ENCODE measurements at regions of chr16 and their contacts with region 1.

Region 1: DNA sequence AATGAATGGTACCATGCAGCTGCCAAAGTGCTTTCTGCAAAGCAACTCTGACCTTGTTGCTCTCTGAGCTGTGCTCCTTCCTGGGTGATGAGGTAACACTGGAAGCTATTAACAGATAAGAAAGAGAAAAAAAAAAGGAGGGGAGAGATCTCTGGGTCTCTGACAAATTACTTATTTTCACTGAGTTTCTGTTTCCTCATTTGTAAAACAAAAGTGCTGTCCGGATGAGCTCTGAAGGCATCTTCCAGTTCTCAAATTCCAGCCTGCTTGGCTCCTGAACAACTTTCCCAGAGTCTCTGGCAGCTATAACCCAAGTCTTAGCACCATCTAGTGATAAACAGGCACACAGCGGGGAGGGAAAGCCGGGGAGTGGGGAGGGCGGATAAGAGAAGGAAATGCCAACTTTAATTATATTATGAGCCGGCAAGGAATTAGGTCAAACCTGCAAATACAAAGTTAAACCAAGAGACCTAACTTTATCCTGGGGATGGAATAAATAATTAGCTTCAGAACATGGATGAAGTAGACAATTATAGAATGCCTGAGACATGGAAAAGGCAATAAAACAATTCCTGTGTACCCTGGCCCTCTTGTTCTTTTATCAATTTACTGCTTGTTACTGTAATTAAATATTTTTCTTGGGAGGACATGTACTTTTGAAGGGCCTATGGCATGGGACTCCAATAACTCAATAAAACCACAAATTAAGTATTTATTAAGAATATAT is 61.3 kb upstream of the KIFC3 start:
- DNase-seq: peak in 2 of 4 experiments; percentile 46 to 55
- ATAC-seq: peak; percentile 78
- H3K4me3 ChIP-seq: no peak overlapping the region
- H3K27ac ChIP-seq: no peak overlapping the region
- H3K4me1 ChIP-seq: peaks cover 3 to 14% of the 10 kb centered on the region in 2 experiments; a peak in 3 of 5 replicates
- H3K27me3 ChIP-seq: peaks cover 6 to 10% of the 10 kb centered on the region in 2 experiments; a peak in 2 of 5 replicates
- CTCF ChIP-seq: peak; percentile 56 to 77 (median 57)
- EP300 ChIP-seq: no peak
- POLR2A ChIP-seq: no peak
- RAD21 ChIP-seq: peak; percentile 84 to 89

Region 2: DNA sequence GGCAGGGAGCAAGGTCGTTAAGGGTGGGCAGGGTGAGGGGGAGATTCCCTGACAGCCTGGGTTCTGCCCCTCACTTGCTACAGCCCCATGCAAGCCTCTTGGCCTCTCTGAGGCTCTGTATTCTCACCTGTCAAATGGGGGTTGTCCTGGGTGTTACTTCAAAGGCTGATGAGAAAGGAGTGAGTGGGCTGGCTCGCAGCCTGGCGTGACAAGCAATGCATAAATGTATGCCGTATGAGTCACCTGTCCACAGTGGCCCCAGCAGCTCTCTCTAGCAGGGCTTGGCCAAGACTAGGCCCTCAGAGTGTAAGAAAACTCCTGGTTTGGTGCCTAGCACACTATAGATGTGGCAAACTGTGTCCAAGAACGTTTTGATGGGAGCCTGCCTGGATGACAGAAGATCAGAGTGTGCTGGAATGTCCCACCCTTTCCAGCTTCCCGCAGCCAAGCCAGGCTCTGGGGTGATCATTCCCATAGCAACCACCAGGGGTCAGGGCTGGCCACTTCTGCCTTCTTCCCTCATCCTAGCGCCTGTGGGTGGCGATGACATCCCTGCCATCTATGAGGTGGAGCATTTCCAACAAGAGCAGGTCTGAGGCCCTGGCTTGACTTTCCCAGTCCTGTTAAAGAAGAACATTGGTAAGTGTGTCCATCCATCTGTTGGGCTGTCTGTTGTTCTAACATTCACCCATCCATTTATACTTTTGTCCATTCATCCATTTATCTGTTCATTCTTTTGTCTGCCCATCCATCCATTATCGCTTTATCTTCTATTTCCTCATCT is 272.3 kb before region 1 on chr16:
- CTCF ChIA-PET with region 1: interaction called, 8 read pairs
- POLR2A ChIA-PET with region 1: no interaction called
- in situ Hi-C with region 1: no loop called
- intact Hi-C with region 1: loop called (anchors 10 kb)
- DNase-seq: peak; percentile 80 to 85 (median 82)
- ATAC-seq: peak; percentile 100
- H3K4me3 ChIP-seq: no peak overlapping the region
- H3K27ac ChIP-seq: no peak overlapping the region
- H3K4me1 ChIP-seq: peaks cover 6 to 11% of the 10 kb centered on the region in 2 experiments; a peak in 4 of 5 replicates
- H3K27me3 ChIP-seq: peaks cover 2 to 8% of the 10 kb centered on the region in 2 experiments; a peak in 2 of 5 replicates
- CTCF ChIP-seq: peak; percentile 94 to 99 (median 99)
- EP300 ChIP-seq: no peak
- POLR2A ChIP-seq: no peak
- RAD21 ChIP-seq: peak; percentile 81 to 94

Region 3: GRCh38 chr16:57653936-57654335 is 209.7 kb before region 1 on chr16:
- CTCF ChIA-PET with region 1: interaction called, 5 read pairs
- POLR2A ChIA-PET with region 1: interaction called, 3 read pairs
- in situ Hi-C with region 1: no loop called
- intact Hi-C with region 1: loop called (anchors 10 kb)
- DNase-seq: no peak
- ATAC-seq: no peak
- H3K4me3 ChIP-seq: no peak overlapping the region
- H3K27ac ChIP-seq: no peak overlapping the region
- H3K4me1 ChIP-seq: peaks cover 0 to 21% of the 10 kb centered on the region in 2 experiments; a peak in 2 of 5 replicates
- H3K27me3 ChIP-seq: peaks cover 3 to 5% of the 10 kb centered on the region in 2 experiments; a peak in 1 of 5 replicates
- CTCF ChIP-seq: no peak
- EP300 ChIP-seq: no peak
- POLR2A ChIP-seq: no peak
- RAD21 ChIP-seq: no peak

Region 4: GRCh38 chr16:57757326-57757786 is 106.2 kb before region 1 on chr16:
- CTCF ChIA-PET with region 1: interaction called, 7 read pairs
- POLR2A ChIA-PET with region 1: interaction called, 3 read pairs
- in situ Hi-C with region 1: no loop called
- intact Hi-C with region 1: loop called (anchors 1 kb)
- DNase-seq: peak; percentile 90 to 94 (median 94)
- ATAC-seq: peak; percentile 98
- H3K4me3 ChIP-seq: no peak overlapping the region
- H3K27ac ChIP-seq: 0 out of 3 replicates have a peak overlapping the region, but pooled peaks have one; percentile 20
- H3K4me1 ChIP-seq: peaks cover 0 to 60% of the 10 kb centered on the region in 2 experiments; a peak in 3 of 5 replicates
- H3K27me3 ChIP-seq: no peaks in the 10 kb centered on the region
- CTCF ChIP-seq: peak; percentile 94 to 97 (median 95)
- EP300 ChIP-seq: no peak
- POLR2A ChIP-seq: no peak; the same call in 1 of the 2 replicates
- RAD21 ChIP-seq: peak; percentile 89 to 91

Region 5: GRCh38 chr16:57795431-57795878 is 68.1 kb before region 1 on chr16:
- CTCF ChIA-PET with region 1: interaction called, 3 read pairs
- POLR2A ChIA-PET with region 1: no interaction called
- in situ Hi-C with region 1: no loop called
- intact Hi-C with region 1: loop called (anchors 1 kb)
- DNase-seq: peak in 3 of 4 experiments; percentile 27 to 63 (median 44)
- ATAC-seq: peak; percentile 68
- H3K4me3 ChIP-seq: no peak overlapping the region
- H3K27ac ChIP-seq: no peak overlapping the region
- H3K4me1 ChIP-seq: peaks cover 24 to 43% of the 10 kb centered on the region in 2 experiments
- H3K27me3 ChIP-seq: no peaks in the 10 kb centered on the region
- CTCF ChIP-seq: peak; percentile 33 to 53 (median 45); a peak in 5 of 6 replicates
- EP300 ChIP-seq: no peak
- POLR2A ChIP-seq: no peak
- RAD21 ChIP-seq: peak in 1 of 2 experiments; percentile 46; a peak in 2 of 4 replicates

Region 6: DNA sequence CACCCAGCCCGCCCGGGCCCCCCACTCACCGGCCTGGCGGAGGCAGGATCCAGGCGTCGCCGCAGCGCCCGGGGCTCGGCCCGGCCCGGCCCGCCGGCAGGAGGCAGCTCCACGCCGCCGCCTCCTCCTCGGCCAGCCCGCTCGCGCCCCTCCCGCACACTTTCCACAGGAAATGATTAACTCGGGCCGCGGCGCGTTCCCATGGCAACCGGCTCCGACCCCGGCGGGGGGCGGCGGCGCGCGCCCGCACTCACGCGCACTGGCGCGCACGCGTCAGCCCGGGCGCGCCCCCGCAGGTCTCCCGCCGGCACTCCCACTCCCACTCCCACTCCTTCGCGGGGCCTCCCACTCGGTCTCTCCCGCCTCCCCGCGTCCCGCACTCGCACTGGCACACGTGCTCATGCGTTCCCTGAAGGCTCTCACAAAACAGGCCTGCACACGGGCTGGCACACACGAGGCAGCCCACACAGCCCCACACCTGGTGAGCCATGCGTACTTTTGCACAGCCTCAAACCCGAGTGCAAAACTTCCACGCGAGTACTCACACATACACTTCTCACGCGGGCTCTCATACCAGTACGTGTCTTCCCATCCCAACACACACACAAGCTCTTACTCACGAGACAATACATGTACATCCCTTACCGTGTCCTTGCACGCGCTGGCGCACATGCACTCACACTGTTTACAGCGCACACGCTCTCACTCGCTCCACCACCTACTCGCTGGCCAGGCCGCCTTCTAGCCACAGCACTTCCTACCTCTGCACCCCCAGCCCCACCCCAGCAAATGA is 61.1 kb before region 1 on chr16 and contains the start of gene KIFC3:
- CTCF ChIA-PET with region 1: interaction called, 9 read pairs
- POLR2A ChIA-PET with region 1: interaction called, 3 read pairs
- in situ Hi-C with region 1: no loop called
- intact Hi-C with region 1: loop called (anchors 2 kb)
- DNase-seq: peak; percentile 88 to 94 (median 92)
- ATAC-seq: peak; percentile 71
- H3K4me3 ChIP-seq: peak within 1 kb of the TSS; percentile 61
- H3K27ac ChIP-seq: peak within 1 kb of the TSS; percentile 86
- H3K4me1 ChIP-seq: peaks cover 54 to 55% of the 10 kb centered on the region in 2 experiments
- H3K27me3 ChIP-seq: no peaks in the 10 kb centered on the region
- CTCF ChIP-seq: peak in 2 of 3 experiments; percentile 37 to 59; a peak in 3 of 6 replicates
- EP300 ChIP-seq: no peak; the same call in 1 of the 2 replicates
- POLR2A ChIP-seq: peak; percentile 69; the same call in 1 of the 2 replicates
- RAD21 ChIP-seq: peak in 1 of 2 experiments; percentile 61; a peak in 3 of 4 replicates
- polyA plus RNA-seq, gene KIFC3: 0.23 to 0.96 TPM

Region 7: DNA sequence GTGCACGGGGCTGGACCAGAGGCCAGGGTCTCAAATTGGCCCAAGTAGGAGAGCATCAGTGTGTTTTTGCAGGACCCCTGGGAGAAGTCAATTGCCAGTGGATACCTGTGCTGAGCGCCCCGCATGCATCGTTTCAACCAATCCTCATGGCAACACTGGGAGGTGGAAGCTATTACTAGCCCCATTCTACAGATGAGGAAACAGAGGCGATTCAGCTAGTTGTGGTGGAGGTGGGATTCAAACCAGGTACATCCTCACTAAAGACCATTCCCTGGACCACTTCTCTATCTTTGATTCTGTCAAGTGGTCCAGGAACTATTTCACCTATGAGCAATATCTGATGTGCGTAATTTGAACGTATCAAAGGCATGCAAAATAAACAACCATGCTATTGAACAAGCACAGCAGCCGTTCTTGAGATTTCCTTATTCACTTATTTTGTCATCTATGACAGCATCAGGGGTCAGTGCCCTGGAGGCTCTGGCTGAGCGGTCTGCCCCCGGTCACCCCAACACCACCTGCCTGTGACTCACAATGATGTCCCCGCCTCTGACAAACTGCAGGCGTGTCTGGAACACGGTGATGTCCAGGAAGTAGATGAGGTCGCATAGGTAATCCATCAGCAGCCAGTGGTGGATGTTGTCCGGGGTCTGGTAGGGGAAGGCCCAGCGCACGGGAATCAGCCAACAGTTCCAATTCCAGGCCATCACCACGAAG is 53.3 kb after region 1 on chr16:
- CTCF ChIA-PET with region 1: no interaction called
- POLR2A ChIA-PET with region 1: no interaction called
- in situ Hi-C with region 1: no loop called
- intact Hi-C with region 1: no loop called
- DNase-seq: no peak
- ATAC-seq: peak; percentile 34; the same call in 1 of the 3 replicates
- H3K4me3 ChIP-seq: no peak overlapping the region
- H3K27ac ChIP-seq: no peak overlapping the region
- H3K4me1 ChIP-seq: 0 out of 5 replicates have a peak, but pooled peaks cover 0 to 3% of the 10 kb centered on the region in 2 experiments
- H3K27me3 ChIP-seq: peaks cover 12 to 68% of the 10 kb centered on the region in 2 experiments; a peak in 4 of 5 replicates
- CTCF ChIP-seq: no peak
- EP300 ChIP-seq: no peak
- POLR2A ChIP-seq: no peak
- RAD21 ChIP-seq: no peak